ENCODE measurements at regions of chr5 and their contacts with region 1.

Region 1: GRCh38 chr5:23466401-23466912 is 41.0 kb upstream of the PRDM9 start:
- DNase-seq: peak; percentile 97
- H3K4me3 Mint-ChIP-seq: no peak overlapping the region
- H3K27ac Mint-ChIP-seq: peak overlapping the region; percentile 57
- H3K4me1 Mint-ChIP-seq: peaks cover 6% of the 10 kb centered on the region
- H3K27me3 Mint-ChIP-seq: no peaks in the 10 kb centered on the region
- CTCF ChIP-seq: no peak

Region 2: GRCh38 chr5:23445573-23445972 is 20.9 kb before region 1 on chr5:
- CTCF ChIA-PET with region 1: interaction called, 5 read pairs
- POLR2A ChIA-PET with region 1: interaction called, 6 read pairs
- intact Hi-C with region 1: loop called (anchors 1 kb)
- DNase-seq: peak; percentile 38
- H3K4me3 Mint-ChIP-seq: no peak overlapping the region
- H3K27ac Mint-ChIP-seq: peak overlapping the region; percentile 70
- H3K4me1 Mint-ChIP-seq: peaks cover 19% of the 10 kb centered on the region
- H3K27me3 Mint-ChIP-seq: no peaks in the 10 kb centered on the region
- CTCF ChIP-seq: no peak

Region 3: GRCh38 chr5:23776684-23777083 is 310.2 kb after region 1 on chr5:
- CTCF ChIA-PET with region 1: no interaction called
- POLR2A ChIA-PET with region 1: no interaction called
- intact Hi-C with region 1: no loop called
- DNase-seq: no peak
- H3K4me3 Mint-ChIP-seq: no peak overlapping the region
- H3K27ac Mint-ChIP-seq: no peak overlapping the region
- H3K4me1 Mint-ChIP-seq: no peaks in the 10 kb centered on the region
- H3K27me3 Mint-ChIP-seq: no peaks in the 10 kb centered on the region
- CTCF ChIP-seq: no peak

Measured in MCF 10A (cell line).